Endothelial cell of umbilical vein (primary cell): ENCODE measurements at regions of chr19 and their contacts with region 1.

Region 1: DNA sequence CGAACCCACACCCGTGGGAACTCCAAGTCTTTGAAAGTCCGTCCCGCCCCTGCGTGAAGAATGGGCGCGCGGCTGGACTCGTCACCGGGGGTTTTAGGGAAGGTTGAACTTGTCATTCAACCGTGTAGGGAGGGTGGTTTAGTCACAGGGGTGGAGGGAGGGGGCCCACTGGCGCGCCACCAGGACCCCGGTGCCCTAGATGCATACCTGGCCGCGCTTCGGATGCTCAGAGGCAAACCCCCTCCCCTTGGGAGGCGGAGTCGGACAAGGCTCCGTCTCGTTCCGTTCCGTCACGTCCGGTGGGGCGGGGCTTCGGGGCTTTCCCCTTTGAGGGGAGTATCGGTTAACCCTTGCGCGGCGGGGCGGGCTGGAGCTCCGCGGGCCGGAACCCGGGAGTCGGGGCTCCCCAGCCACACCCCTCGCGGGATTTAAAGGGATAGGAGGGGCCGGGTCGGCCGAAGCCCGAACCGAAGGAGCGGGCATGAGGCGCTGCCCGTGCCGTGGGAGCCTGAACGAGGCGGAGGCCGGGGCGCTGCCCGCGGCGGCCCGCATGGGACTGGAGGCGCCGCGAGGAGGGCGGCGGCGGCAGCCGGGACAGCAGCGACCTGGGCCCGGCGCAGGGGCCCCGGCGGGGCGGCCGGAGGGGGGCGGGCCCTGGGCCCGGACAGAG is at the starts of genes COQ8B and ITPKC:
- DNase-seq: peak; percentile 97
- H3K4me3 ChIP-seq: peak within 1 kb of the TSS; percentile 39 to 78 (median 53)
- H3K27ac ChIP-seq: peak within 1 kb of the TSS; percentile 94
- H3K4me1 ChIP-seq: peaks cover 52% of the 10 kb centered on the region
- H3K27me3 ChIP-seq: no peaks in the 10 kb centered on the region
- CTCF ChIP-seq: no peak
- POLR2A ChIP-seq: peak; percentile 62
- total RNA-seq, gene COQ8B: 15.3 and 19.2 TPM in 2 replicates
- total RNA-seq, gene ITPKC: 16.1 and 16.9 TPM in 2 replicates

Region 2: GRCh38 chr19:40806488-40807468 is 90.0 kb after region 1 on chr19:
- CTCF ChIA-PET with region 1: interaction called, 13 read pairs
- POLR2A ChIA-PET with region 1: no interaction called
- dilution Hi-C with region 1: no loop called
- intact Hi-C with region 1: loop called (anchors 1 kb)
- DNase-seq: peak; percentile 99
- H3K4me3 ChIP-seq: peak overlapping the region in 1 of 3 experiments; percentile 9
- H3K27ac ChIP-seq: peak overlapping the region; percentile 35
- H3K4me1 ChIP-seq: peaks cover 63% of the 10 kb centered on the region
- H3K27me3 ChIP-seq: peaks cover 0 to under 1% of the 10 kb centered on the region in 2 experiments
- CTCF ChIP-seq: peak; percentile 99
- POLR2A ChIP-seq: peak; percentile 29